Activated B cell treated with CpG ODN at 0.5 μM for 24 hours (primary cell): ENCODE measurements at regions of chr7 and their contacts with region 1.

Region 1: GRCh38 chr7:19725770-19726169 is 16.9 kb upstream of the POLR1F start:
- DNase-seq: no peak
- ATAC-seq: no peak
- H3K4me3 Mint-ChIP-seq: no peak overlapping the region
- H3K27ac Mint-ChIP-seq: no peak overlapping the region
- H3K4me1 Mint-ChIP-seq: no peaks in the 10 kb centered on the region
- H3K27me3 Mint-ChIP-seq: peaks cover 18% of the 10 kb centered on the region
- CTCF ChIP-seq: no peak

Region 2: DNA sequence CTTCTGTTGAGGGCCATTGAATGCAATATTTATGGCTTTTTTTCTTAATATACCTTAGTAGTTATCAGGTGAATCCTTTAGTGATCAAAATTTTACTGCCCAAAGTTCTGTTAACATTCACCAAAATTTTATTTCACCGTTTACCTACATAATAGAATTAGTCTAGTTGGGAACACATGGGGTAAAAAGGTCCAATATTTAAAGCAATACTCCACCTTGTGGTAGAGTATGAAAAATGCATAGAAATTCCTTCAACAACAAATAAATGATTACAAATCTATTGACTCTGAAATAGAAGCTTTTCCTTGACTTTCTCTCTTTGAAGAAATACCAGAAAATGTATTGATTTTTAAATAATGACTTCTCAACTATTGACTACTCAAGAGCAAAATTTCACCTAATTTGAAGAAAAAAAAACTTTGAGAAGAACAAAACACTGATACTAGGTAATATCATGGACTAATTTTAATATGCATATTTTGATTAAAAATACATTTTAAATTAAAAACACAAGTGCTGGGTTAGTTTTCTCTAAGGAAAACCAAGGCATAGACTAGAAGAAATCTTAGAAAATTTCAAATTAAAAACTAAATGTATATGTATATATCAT is 60.3 kb before region 1 on chr7:
- CTCF ChIA-PET with region 1: no interaction called
- POLR2A ChIA-PET with region 1: no interaction called
- intact Hi-C with region 1: no loop called
- DNase-seq: no peak
- ATAC-seq: peak; percentile 32
- H3K4me3 Mint-ChIP-seq: no peak overlapping the region
- H3K27ac Mint-ChIP-seq: no peak overlapping the region
- H3K4me1 Mint-ChIP-seq: peaks cover 20% of the 10 kb centered on the region
- H3K27me3 Mint-ChIP-seq: no peaks in the 10 kb centered on the region
- CTCF ChIP-seq: no peak

Region 3: GRCh38 chr7:19713676-19714075 is 12.1 kb before region 1 on chr7:
- CTCF ChIA-PET with region 1: interaction called, 13 read pairs
- POLR2A ChIA-PET with region 1: no interaction called
- intact Hi-C with region 1: no loop called
- DNase-seq: no peak
- ATAC-seq: no peak
- H3K4me3 Mint-ChIP-seq: no peak overlapping the region
- H3K27ac Mint-ChIP-seq: no peak overlapping the region
- H3K4me1 Mint-ChIP-seq: peaks cover 14% of the 10 kb centered on the region
- H3K27me3 Mint-ChIP-seq: peaks cover 9% of the 10 kb centered on the region
- CTCF ChIP-seq: no peak

Region 4: DNA sequence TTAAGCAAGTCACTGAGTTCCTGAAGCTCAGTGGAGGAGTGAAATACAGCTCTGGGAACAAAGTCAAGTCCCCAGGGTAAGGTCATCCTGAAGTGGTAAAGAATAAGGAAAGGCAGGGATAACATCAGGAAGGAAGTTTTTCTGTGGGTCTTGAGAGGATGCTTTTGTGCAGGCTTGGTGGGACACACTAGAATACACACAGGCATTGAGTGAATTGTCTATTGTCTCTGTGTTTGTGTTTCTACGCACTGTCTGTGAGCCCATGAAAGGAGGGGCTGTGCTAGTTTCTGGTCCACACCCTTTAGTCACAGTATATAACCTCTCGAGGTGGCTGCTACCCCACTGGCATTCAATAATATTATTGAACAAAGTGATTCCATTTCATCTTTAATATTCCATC is 793.9 kb after region 1 on chr7:
- CTCF ChIA-PET with region 1: no interaction called
- POLR2A ChIA-PET with region 1: no interaction called
- intact Hi-C with region 1: no loop called
- DNase-seq: no peak
- ATAC-seq: no peak
- H3K4me3 Mint-ChIP-seq: no peak overlapping the region
- H3K27ac Mint-ChIP-seq: no peak overlapping the region
- H3K4me1 Mint-ChIP-seq: no peaks in the 10 kb centered on the region
- H3K27me3 Mint-ChIP-seq: peaks cover 1% of the 10 kb centered on the region
- CTCF ChIP-seq: no peak